Gastrocnemius medialis (tissue), 4 donors: ENCODE measurements at regions of chr6 and their contacts with region 1.

Region 1: GRCh38 chr6:118542184-118542952 is 5.7 kb upstream of the PLN start:
- DNase-seq: no peak
- ATAC-seq: no peak
- H3K4me3 ChIP-seq: no peak overlapping the region
- H3K27ac ChIP-seq: peak overlapping the region in 1 of 4 donors; percentile 88
- H3K4me1 ChIP-seq: peaks cover 22 to 49% of the 10 kb centered on the region in 2 donors
- H3K27me3 ChIP-seq: no peaks in the 10 kb centered on the region
- CTCF ChIP-seq: no peak
- POLR2A ChIP-seq: no peak

Region 2: GRCh38 chr6:118514689-118515088 is 27.7 kb before region 1 on chr6:
- in situ Hi-C with region 1: no loop called
- intact Hi-C with region 1: loop called (anchors 2 kb)
- DNase-seq: peak; percentile 66 to 77
- ATAC-seq: peak; percentile 98 to 99
- H3K4me3 ChIP-seq: no peak overlapping the region
- H3K27ac ChIP-seq: peak overlapping the region; percentile 71 to 82 (median 76)
- H3K4me1 ChIP-seq: peaks cover 36 to 52% of the 10 kb centered on the region in 2 donors
- H3K27me3 ChIP-seq: no peaks in the 10 kb centered on the region
- CTCF ChIP-seq: no peak
- POLR2A ChIP-seq: no peak

Region 3: GRCh38 chr6:118581489-118581959 is 39.2 kb after region 1 on chr6:
- in situ Hi-C with region 1: no loop called
- intact Hi-C with region 1: no loop called
- DNase-seq: peak; percentile 13 to 64
- ATAC-seq: peak; percentile 85 to 90
- H3K4me3 ChIP-seq: peak overlapping the region in 2 of 4 donors; percentile 12 to 24
- H3K27ac ChIP-seq: peak overlapping the region; percentile 81 to 85 (median 84)
- H3K4me1 ChIP-seq: peaks cover 48 to 54% of the 10 kb centered on the region in 2 donors
- H3K27me3 ChIP-seq: no peaks in the 10 kb centered on the region
- CTCF ChIP-seq: no peak
- POLR2A ChIP-seq: no peak

Region 4: GRCh38 chr6:118591897-118592296 is 49.5 kb after region 1 on chr6:
- in situ Hi-C with region 1: no loop called
- intact Hi-C with region 1: no loop called
- DNase-seq: no peak
- ATAC-seq: peak; percentile 55 to 70
- H3K4me3 ChIP-seq: peak overlapping the region in 1 of 4 donors; percentile 3
- H3K27ac ChIP-seq: peak overlapping the region; percentile 47 to 71 (median 56)
- H3K4me1 ChIP-seq: peaks cover 72 to 75% of the 10 kb centered on the region in 2 donors
- H3K27me3 ChIP-seq: no peaks in the 10 kb centered on the region
- CTCF ChIP-seq: no peak
- POLR2A ChIP-seq: no peak